Esophagus muscularis mucosa (tissue), 4 donors: ENCODE measurements at regions of chr17 and their contacts with region 1.

Region 1: GRCh38 chr17:35242805-35243560 is at the start of gene SLFN5:
- DNase-seq: peak; percentile 99
- H3K4me3 ChIP-seq: peak within 1 kb of the TSS; percentile 73 to 87 (median 78)
- H3K27ac ChIP-seq: peak within 1 kb of the TSS; percentile 96 to 98 (median 97)
- H3K4me1 ChIP-seq: peaks cover 26 to 53% (median 49%) of the 10 kb centered on the region in 4 donors
- H3K27me3 ChIP-seq: no peaks in the 10 kb centered on the region
- CTCF ChIP-seq: no peak
- EP300 ChIP-seq: no peak
- POLR2A ChIP-seq: peak; percentile 98
- total RNA-seq, gene SLFN5: 17.9 to 33.4 (median 26.9) TPM

Region 2: DNA sequence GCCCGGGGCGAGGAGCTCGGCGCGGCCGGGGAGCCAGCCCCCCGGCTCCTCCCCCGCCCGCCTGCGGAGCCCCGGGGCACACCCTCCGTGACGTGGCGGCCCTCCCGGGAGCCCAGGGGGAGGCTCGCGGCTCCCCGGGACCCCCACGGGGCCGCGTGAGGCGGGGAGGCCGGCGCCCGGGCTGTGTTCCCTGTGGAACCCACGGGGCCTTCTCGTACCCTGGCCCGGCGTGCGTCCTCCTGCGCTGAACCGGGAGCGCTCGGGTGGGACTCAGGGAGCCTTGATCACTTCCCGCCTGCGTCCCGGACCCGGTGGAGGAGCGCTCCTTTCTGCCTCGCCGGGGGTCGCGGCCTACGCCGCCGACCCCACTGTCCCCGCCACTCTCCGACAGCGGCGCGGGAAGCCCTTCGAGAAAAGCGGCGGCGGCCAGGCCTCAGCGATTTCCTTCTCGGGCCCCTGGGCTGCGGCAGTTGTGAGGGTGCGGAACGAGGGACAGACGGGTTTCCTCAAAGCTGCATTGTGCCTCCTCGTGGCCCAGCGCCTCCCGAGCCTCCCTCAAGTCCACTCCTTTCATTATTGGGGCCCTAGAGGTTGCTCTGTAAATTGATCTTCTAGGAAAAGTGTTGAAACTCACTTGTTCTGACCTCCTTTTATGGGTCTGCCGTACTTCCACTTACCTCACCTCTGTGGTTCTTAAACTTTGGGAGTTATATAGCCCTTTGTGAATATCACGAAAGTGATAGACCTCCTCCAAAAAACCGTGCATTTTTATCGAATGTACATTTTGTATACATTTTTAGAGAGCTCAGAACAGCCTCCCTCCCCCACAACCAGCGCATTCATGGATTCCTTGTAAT is 262.1 kb before region 1 on chr17:
- intact Hi-C with region 1: loop called (anchors 10 kb)
- DNase-seq: peak; percentile 95
- H3K4me3 ChIP-seq: peak overlapping the region; percentile 83 to 95 (median 92)
- H3K27ac ChIP-seq: peak overlapping the region; percentile 95 to 100 (median 100)
- H3K4me1 ChIP-seq: peaks cover 23 to 55% (median 44%) of the 10 kb centered on the region in 4 donors
- H3K27me3 ChIP-seq: no peaks in the 10 kb centered on the region
- CTCF ChIP-seq: peak in 2 of 3 experiments; percentile 33 to 41
- EP300 ChIP-seq: no peak
- POLR2A ChIP-seq: peak; percentile 63

Region 3: DNA sequence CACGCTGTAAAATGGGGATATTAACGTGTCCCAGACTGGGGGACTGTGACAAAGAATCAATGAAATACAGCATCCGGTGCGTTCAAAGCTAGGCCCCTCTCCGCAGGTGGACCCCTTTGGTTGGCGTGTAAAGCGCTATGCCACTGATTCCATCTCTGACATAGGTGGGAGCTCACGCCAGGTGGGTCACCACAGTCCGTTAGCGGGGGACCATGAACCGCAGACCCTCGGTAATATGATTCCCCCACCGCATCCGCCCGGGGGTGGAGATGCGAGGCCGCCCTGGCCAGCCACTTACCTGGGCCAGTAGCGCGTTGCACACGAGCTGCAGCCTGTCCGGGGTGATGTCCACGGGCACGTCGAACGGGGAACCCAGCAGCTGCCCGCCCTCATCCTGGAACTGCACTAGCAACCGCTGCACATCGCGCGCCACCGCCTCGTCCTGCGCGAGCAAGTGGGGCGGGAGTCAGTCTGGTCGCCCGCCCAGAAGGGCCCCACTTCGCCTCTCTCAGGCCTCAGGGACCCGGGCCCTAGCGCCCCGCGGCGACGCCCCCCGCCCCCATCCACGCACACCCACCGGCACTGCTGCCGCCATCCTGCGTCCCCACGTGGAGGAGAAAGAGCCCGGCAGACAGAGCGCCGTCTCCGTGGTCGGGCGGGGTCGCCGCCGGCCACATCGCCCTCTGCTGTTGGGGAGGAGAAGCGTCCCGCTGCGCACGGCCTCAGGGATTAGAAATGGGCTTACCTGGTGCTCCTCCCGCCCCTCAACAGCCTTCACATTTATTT is 101.1 kb before region 1 on chr17 and contains the start of gene NLE1:
- intact Hi-C with region 1: loop called (anchors 5 kb)
- DNase-seq: no peak
- H3K4me3 ChIP-seq: peak within 1 kb of the TSS; percentile 70 to 91 (median 74)
- H3K27ac ChIP-seq: peak within 1 kb of the TSS in 3 of 4 donors; percentile 1 to 56 (median 39)
- H3K4me1 ChIP-seq: peaks cover 12 to 29% (median 23%) of the 10 kb centered on the region in 4 donors
- H3K27me3 ChIP-seq: no peaks in the 10 kb centered on the region
- CTCF ChIP-seq: peak; percentile 89 to 98 (median 96)
- EP300 ChIP-seq: no peak
- POLR2A ChIP-seq: no peak
- total RNA-seq, gene NLE1: 9.6 to 16.1 (median 13.8) TPM

Region 4: GRCh38 chr17:35312790-35313711 is 70.1 kb after region 1 on chr17:
- intact Hi-C with region 1: loop called (anchors 5 kb)
- DNase-seq: no peak
- H3K4me3 ChIP-seq: peak overlapping the region; percentile 41 to 51 (median 44)
- H3K27ac ChIP-seq: peak overlapping the region; percentile 2 to 47 (median 34)
- H3K4me1 ChIP-seq: peaks cover 28 to 35% (median 31%) of the 10 kb centered on the region in 4 donors
- H3K27me3 ChIP-seq: peaks cover 0 to 18% (median 0%) of the 10 kb centered on the region in 4 donors
- CTCF ChIP-seq: peak; percentile 65 to 84 (median 81)
- EP300 ChIP-seq: no peak
- POLR2A ChIP-seq: no peak

Region 5: GRCh38 chr17:35432176-35433074 is 189.4 kb after region 1 on chr17 and contains the start of gene SLFN12:
- intact Hi-C with region 1: loop called (anchors 10 kb)
- DNase-seq: no peak
- H3K4me3 ChIP-seq: peak within 1 kb of the TSS; percentile 57 to 69 (median 60)
- H3K27ac ChIP-seq: peak within 1 kb of the TSS; percentile 83 to 86 (median 85)
- H3K4me1 ChIP-seq: peaks cover 20 to 29% (median 22%) of the 10 kb centered on the region in 4 donors
- H3K27me3 ChIP-seq: no peaks in the 10 kb centered on the region
- CTCF ChIP-seq: no peak
- EP300 ChIP-seq: no peak
- POLR2A ChIP-seq: no peak
- total RNA-seq, gene SLFN12: 6.6 to 11.2 (median 7.7) TPM